ENCODE measurements at regions of chr9 and their contacts with region 1.

Region 1: GRCh38 chr9:94528886-94529285 is 26.0 kb upstream of the PCAT7 start:
- DNase-seq: no peak
- H3K4me3 ChIP-seq: no peak overlapping the region
- H3K27ac ChIP-seq: no peak overlapping the region
- H3K4me1 ChIP-seq: no peaks in the 10 kb centered on the region
- H3K27me3 ChIP-seq: peaks cover 0 to 3% of the 10 kb centered on the region in 2 donors
- CTCF ChIP-seq: no peak

Region 2: DNA sequence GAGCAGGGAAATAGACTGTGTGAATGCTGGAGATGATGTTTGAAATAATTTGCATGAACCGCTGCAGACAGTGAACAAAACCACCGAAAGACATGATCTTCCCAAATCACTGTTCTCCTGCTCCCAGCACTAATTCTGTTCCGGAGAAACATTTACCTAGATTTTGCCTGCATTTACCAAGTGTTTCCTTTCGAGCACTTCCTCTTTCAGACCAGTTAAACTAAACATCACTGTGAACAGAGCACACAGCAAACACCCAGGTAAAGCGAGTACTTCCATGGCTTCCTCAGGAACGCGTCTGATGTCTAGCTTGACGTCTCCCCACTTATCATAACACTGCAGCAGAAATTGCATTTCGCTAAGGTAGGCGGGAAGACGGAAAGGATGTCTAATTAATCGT is 1033.0 kb after region 1 on chr9:
- intact Hi-C with region 1: loop called (anchors 5 kb)
- DNase-seq: no peak
- H3K4me3 ChIP-seq: no peak overlapping the region
- H3K27ac ChIP-seq: no peak overlapping the region
- H3K4me1 ChIP-seq: no peaks in the 10 kb centered on the region
- H3K27me3 ChIP-seq: peaks cover 0 to 18% of the 10 kb centered on the region in 2 donors
- CTCF ChIP-seq: no peak

Measured in tibial artery (tissue), 4 donors.